Caco-2 (cell line): ENCODE measurements at regions of chr1 and their contacts with region 1.

Region 1: GRCh38 chr1:167066333-167067122 is 23.6 kb downstream of the GPA33 start:
- DNase-seq: peak; percentile 69 to 89
- H3K4me3 ChIP-seq: peak overlapping the region; percentile 0; the same call in 1 of the 2 replicates
- H3K4me3 Mint-ChIP-seq: peak overlapping the region; percentile 64
- H3K27ac Mint-ChIP-seq: no peak overlapping the region
- H3K4me1 ChIP-seq: no peaks in the 10 kb centered on the region
- H3K4me1 Mint-ChIP-seq: no peaks in the 10 kb centered on the region
- H3K27me3 ChIP-seq: no peaks in the 10 kb centered on the region
- H3K27me3 Mint-ChIP-seq: no peaks in the 10 kb centered on the region
- CTCF ChIP-seq: peak; percentile 92 to 95

Region 2: GRCh38 chr1:167105271-167106118 is 39.0 kb after region 1 on chr1:
- CTCF ChIA-PET with region 1: no interaction called
- POLR2A ChIA-PET with region 1: no interaction called
- intact Hi-C with region 1: loop called (anchors 1 kb)
- DNase-seq: peak in 1 of 2 experiments; percentile 21
- H3K4me3 ChIP-seq: no peak overlapping the region
- H3K4me3 Mint-ChIP-seq: peak overlapping the region; percentile 28
- H3K27ac Mint-ChIP-seq: no peak overlapping the region
- H3K4me1 ChIP-seq: peaks cover 10% of the 10 kb centered on the region; the same call in 1 of the 2 replicates
- H3K4me1 Mint-ChIP-seq: peaks cover 26% of the 10 kb centered on the region
- H3K27me3 ChIP-seq: no peaks in the 10 kb centered on the region
- H3K27me3 Mint-ChIP-seq: no peaks in the 10 kb centered on the region
- CTCF ChIP-seq: peak in 1 of 2 experiments; percentile 12

Region 3: GRCh38 chr1:167128261-167129227 is 62.0 kb after region 1 on chr1:
- CTCF ChIA-PET with region 1: no interaction called
- POLR2A ChIA-PET with region 1: no interaction called
- intact Hi-C with region 1: loop called (anchors 2 kb)
- DNase-seq: no peak
- H3K4me3 ChIP-seq: no peak overlapping the region
- H3K4me3 Mint-ChIP-seq: no peak overlapping the region
- H3K27ac Mint-ChIP-seq: no peak overlapping the region
- H3K4me1 ChIP-seq: no peaks in the 10 kb centered on the region
- H3K4me1 Mint-ChIP-seq: peaks cover 7% of the 10 kb centered on the region
- H3K27me3 ChIP-seq: no peaks in the 10 kb centered on the region
- H3K27me3 Mint-ChIP-seq: peaks cover 28% of the 10 kb centered on the region
- CTCF ChIP-seq: no peak

Region 4: GRCh38 chr1:167342846-167343245 is 276.3 kb after region 1 on chr1:
- CTCF ChIA-PET with region 1: interaction called, 3 read pairs
- POLR2A ChIA-PET with region 1: no interaction called
- intact Hi-C with region 1: loop called (anchors 1 kb)
- DNase-seq: no peak
- H3K4me3 ChIP-seq: no peak overlapping the region
- H3K4me3 Mint-ChIP-seq: no peak overlapping the region
- H3K27ac Mint-ChIP-seq: no peak overlapping the region
- H3K4me1 ChIP-seq: no peaks in the 10 kb centered on the region
- H3K4me1 Mint-ChIP-seq: peaks cover 12% of the 10 kb centered on the region
- H3K27me3 ChIP-seq: no peaks in the 10 kb centered on the region
- H3K27me3 Mint-ChIP-seq: no peaks in the 10 kb centered on the region
- CTCF ChIP-seq: peak; percentile 23 to 37

Region 5: GRCh38 chr1:167409183-167409582 is 342.7 kb after region 1 on chr1:
- CTCF ChIA-PET with region 1: no interaction called
- POLR2A ChIA-PET with region 1: no interaction called
- intact Hi-C with region 1: loop called (anchors 1 kb)
- DNase-seq: peak in 1 of 2 experiments; percentile 35
- H3K4me3 ChIP-seq: no peak overlapping the region
- H3K4me3 Mint-ChIP-seq: no peak overlapping the region
- H3K27ac Mint-ChIP-seq: no peak overlapping the region
- H3K4me1 ChIP-seq: no peaks in the 10 kb centered on the region
- H3K4me1 Mint-ChIP-seq: no peaks in the 10 kb centered on the region
- H3K27me3 ChIP-seq: no peaks in the 10 kb centered on the region
- H3K27me3 Mint-ChIP-seq: no peaks in the 10 kb centered on the region
- CTCF ChIP-seq: peak in 1 of 2 experiments; percentile 29

Region 6: GRCh38 chr1:167442124-167442848 is 375.8 kb after region 1 on chr1:
- CTCF ChIA-PET with region 1: no interaction called
- POLR2A ChIA-PET with region 1: no interaction called
- intact Hi-C with region 1: loop called (anchors 1 kb)
- DNase-seq: peak; percentile 92 to 93
- H3K4me3 ChIP-seq: no peak overlapping the region
- H3K4me3 Mint-ChIP-seq: no peak overlapping the region
- H3K27ac Mint-ChIP-seq: no peak overlapping the region
- H3K4me1 ChIP-seq: no peaks in the 10 kb centered on the region
- H3K4me1 Mint-ChIP-seq: no peaks in the 10 kb centered on the region
- H3K27me3 ChIP-seq: no peaks in the 10 kb centered on the region
- H3K27me3 Mint-ChIP-seq: no peaks in the 10 kb centered on the region
- CTCF ChIP-seq: peak; percentile 90 to 94